Adrenal gland (tissue), 19 donors: ENCODE measurements at regions of chrX and their contacts with region 1.

Region 1: DNA sequence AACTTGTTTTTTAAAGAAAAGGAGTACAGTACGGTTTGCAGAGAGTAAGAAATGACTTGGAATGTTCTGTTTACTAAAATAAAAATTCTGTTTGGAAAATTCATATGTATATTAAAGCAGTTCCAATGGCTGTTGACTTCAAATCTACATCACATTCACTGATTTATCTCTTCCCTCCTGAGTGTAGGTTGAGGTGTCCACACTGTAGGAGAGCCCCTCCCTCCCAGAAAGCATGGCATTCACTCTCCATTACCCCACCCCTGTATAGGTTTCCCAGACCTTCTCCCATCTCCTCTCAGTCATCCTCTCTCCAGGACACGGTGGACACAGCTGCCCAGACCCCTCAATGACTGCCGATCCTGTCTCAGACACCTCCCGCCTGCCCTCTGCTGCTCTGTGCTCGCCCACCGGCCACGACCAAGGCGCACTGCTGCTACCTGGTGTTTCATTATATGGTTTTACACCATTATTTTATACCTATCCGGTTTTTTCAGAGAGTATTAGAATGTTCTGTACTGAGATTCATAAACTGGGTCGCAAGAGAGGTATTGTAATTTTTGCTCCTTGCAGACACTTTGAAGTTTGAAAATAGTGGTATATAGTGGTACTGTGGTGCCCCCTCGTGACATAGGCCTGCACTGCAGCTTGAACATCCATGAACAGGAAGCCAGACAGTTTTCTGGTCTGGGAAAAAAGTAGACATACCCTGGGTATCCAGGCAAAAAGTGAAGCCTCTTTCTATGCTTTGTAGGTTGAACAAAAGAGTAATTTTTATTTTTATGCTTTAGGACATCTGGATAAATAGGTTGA is 38.8 kb upstream of the BEX4 start:
- DNase-seq: peak; percentile 23 to 85 (median 72)
- H3K4me3 ChIP-seq: no peak overlapping the region
- H3K27ac ChIP-seq: no peak overlapping the region
- H3K4me1 ChIP-seq: no peaks in the 10 kb centered on the region
- H3K27me3 ChIP-seq: peaks cover 37% of the 10 kb centered on the region
- CTCF ChIP-seq: peak; percentile 50 to 76 (median 66)
- POLR2A ChIP-seq: no peak

Region 2: DNA sequence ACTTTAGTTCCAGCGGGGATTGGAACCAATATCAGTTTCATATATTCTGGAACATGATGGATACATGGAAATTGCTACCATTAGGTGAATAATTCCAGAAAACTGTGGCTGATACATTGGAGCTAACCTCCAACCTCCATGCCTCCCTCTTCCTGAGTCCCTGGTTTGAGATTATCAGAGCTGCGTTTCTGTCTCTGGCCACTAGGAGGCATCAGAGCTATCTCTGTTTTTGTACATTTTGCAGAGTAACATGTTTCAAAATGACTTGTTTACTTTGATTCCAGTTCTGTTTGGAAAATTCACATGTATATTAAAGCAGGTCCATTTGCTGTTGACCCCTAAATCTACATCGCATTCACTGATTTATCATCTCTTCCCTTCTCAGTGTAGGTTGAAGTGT is 241.5 kb before region 1 on chrX:
- intact Hi-C with region 1: loop called in 1 of 2 experiments (anchors 10 kb)
- DNase-seq: peak in 5 of 7 donors; percentile 18 to 56 (median 27)
- H3K4me3 ChIP-seq: no peak overlapping the region
- H3K27ac ChIP-seq: no peak overlapping the region
- H3K4me1 ChIP-seq: no peaks in the 10 kb centered on the region
- H3K27me3 ChIP-seq: no peaks in the 10 kb centered on the region
- CTCF ChIP-seq: peak in 5 of 6 experiments; percentile 26 to 66 (median 34)
- POLR2A ChIP-seq: no peak

Region 3: GRCh38 chrX:102950908-102951866 is 225.0 kb before region 1 on chrX:
- intact Hi-C with region 1: loop called in 1 of 2 experiments (anchors 5 kb)
- DNase-seq: peak in 6 of 7 donors; percentile 44 to 74 (median 60)
- H3K4me3 ChIP-seq: no peak overlapping the region
- H3K27ac ChIP-seq: no peak overlapping the region
- H3K4me1 ChIP-seq: no peaks in the 10 kb centered on the region
- H3K27me3 ChIP-seq: no peaks in the 10 kb centered on the region
- CTCF ChIP-seq: peak; percentile 26 to 53 (median 47)
- POLR2A ChIP-seq: no peak